Posterior vena cava (tissue), 2 donors: ENCODE measurements at regions of chr20 and their contacts with region 1.

Region 1: GRCh38 chr20:1313236-1313964 is 15.5 kb downstream of the SDCBP2 start:
- DNase-seq: peak; percentile 87

Region 2: DNA sequence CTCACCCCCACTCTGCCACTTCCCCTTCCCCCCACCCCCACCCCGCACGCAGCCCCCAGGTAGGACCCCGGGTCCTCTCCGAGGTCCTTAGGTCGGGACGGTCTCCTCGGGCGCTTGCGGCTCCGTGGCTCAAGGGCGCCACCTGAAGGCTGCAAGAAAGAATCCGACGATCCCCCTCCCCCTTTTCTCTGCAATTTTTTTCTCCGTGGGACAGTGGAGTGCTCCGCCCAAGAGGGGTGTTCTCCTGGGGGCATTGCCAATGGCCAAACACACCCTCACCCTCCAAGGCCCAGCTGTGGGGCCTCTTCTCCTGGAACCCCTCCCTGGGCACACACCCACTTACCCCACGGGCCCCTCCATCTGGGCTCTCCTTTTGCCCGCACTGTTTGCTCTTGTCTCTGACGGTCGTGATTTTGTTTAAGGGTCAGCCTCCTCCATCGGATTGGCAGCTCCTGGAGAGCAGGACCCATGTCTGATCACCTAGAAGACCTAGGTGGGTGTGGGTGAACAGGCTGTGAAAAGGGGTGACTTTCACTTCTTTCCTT is 127.5 kb before region 1 on chr20:
- intact Hi-C with region 1: no loop called
- DNase-seq: no peak

Region 3: DNA sequence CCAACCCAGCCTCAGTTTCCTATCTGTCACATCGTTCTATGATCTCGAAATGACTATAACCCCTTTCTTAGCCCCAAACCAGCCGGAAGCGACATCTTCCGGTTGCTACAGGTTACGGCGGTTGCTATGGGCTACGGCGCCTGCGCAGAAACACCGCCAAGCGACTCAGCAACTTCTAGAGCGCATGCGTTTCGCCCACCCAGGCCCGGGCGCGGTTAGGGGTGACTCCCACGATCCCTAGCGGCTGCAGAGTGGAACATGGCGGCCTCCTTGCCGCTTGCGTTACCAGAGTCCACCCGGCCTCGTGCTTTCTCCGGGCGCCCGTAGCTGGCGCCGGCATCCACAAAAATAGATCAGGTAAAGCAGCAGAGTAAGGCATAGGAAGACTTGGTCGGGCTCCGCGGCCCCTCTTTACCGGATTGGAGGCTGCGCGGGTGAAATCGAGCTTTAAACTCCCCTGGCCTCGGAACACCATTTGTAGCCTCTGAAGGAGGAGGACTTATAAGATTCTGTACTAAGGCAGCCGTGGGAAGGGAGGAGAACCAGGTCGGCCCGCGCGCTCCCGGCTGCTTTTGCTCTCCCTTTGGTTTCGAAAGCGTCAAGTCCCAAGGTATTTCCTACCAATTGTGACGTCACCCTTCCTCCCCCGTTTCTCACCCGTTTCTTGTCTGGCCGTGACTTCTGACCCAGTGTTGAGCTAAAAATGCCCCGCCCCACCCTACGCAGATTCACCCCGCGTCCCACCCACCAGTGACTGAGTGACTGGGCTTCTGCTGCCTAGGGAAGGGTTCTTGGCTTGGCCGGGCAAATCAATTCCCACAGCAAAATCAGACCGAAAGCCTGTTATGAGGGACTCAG is 12.0 kb after region 1 on chr20:
- intact Hi-C with region 1: no loop called
- DNase-seq: peak; percentile 100

Region 4: GRCh38 chr20:1438361-1438760 is 125.0 kb after region 1 on chr20:
- intact Hi-C with region 1: loop called in 1 of 2 experiments (anchors 2 kb)
- DNase-seq: no peak

Region 5: DNA sequence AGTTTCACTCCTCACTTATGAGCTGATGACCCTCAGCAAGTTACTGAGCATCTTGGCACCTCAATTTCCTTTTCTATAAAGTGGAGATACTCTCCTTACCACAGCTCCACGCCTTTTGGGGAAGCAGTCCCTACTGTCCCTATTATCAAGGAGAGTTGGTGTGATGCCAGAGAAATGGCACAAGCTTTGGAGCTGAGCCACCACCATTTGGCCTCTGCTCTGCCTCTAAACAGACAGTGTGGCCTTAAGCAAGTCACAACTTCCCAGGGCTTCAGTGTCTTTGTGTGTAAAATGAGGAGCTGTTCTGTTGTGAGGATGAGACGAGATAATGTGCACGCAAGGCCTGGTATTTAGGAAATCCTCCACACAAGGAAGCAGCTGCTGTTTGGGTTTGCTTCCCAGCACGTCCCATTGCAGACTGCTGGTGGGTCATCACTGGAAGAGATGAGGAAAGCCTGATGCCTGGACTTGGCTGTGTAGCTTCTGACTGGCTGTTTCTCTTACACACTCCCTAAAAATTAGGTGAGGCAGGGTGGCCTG is 134.8 kb after region 1 on chr20:
- intact Hi-C with region 1: loop called in 1 of 2 experiments (anchors 1 kb)
- DNase-seq: no peak